Activated naive CD4-positive, alpha-beta T cell treated with anti-CD3 and anti-CD28 coated beads, Interleukin-2, amount 10 ng/mL, durations not matched to agents 7 days and 5 days (primary cell): ENCODE measurements at regions of chr2 and their contacts with region 1.

Region 1: GRCh38 chr2:136059036-136059472 is 58.9 kb downstream of the CXCR4 start:
- DNase-seq: no peak
- H3K4me3 Mint-ChIP-seq: no peak overlapping the region
- H3K27ac Mint-ChIP-seq: peak overlapping the region; percentile 69
- H3K4me1 Mint-ChIP-seq: peaks cover 90% of the 10 kb centered on the region
- H3K27me3 Mint-ChIP-seq: no peaks in the 10 kb centered on the region

Region 2: GRCh38 chr2:135985018-135985825 is 73.8 kb before region 1 on chr2 and contains the start of gene DARS1:
- CTCF ChIA-PET with region 1: interaction called, 25 read pairs
- DNase-seq: peak; percentile 90
- H3K4me3 Mint-ChIP-seq: peak within 1 kb of the TSS; percentile 85
- H3K27ac Mint-ChIP-seq: peak within 1 kb of the TSS; percentile 93
- H3K4me1 Mint-ChIP-seq: peaks cover 59% of the 10 kb centered on the region
- H3K27me3 Mint-ChIP-seq: no peaks in the 10 kb centered on the region

Region 3: DNA sequence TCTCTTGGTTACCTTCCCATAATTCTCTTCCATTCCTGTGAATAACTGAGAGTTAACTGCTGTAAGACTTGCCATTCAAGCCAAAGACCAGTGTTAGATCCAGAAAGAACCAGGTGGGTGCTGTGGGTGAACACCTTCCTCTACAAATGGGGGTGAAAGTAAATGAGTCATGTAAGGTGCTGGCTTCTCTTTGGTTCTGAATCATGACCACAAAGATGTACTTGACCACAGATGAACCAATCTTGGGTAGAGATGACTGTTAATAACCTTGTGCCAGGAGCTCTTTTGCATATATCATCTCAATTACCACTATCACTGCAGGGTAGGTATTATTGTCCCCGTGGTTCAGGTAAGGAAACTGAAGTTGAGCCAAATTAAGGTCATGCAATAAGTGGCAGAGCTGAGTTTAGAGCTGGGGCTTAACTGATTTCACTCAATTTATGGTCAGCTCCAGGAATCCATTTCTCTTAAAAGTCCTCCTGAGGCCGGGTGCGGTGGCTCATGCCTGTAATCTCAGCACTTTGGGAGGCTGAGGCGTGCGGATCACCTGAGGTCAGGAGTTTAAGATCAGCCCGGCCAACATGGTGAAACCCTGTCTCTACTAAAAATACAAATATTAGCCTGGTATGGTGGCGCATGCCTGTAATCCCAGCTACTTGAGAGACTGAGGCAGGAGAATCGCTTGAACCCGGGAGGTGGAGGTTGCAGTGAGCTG is 303.8 kb after region 1 on chr2:
- CTCF ChIA-PET with region 1: no interaction called
- DNase-seq: no peak
- H3K4me3 Mint-ChIP-seq: no peak overlapping the region
- H3K27ac Mint-ChIP-seq: no peak overlapping the region
- H3K4me1 Mint-ChIP-seq: peaks cover 27% of the 10 kb centered on the region
- H3K27me3 Mint-ChIP-seq: peaks cover 6% of the 10 kb centered on the region

Region 4: DNA sequence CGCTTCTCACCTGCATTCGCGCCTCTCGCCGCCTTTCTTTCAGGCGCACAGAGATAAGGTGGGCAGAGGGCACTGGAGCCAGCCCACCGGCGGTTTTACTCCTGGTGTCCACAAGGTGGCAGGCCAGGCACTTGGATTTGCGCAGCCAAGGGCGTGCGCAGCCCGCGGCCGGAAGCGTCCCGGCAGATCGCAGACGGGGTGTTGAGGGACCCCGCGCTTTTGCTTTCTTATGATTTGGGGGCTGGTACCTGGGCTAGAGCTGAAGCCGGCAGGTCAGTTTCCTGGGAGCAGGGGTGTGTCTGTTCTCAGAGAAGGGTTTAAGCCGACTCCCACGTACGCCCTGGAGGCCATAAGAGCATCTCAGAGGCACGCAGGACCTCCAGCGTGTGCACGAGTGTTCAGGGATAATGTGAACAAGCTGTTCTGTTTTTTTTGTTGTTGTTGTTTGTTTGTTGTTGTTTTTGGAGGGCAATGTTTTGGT is 364.5 kb after region 1 on chr2:
- CTCF ChIA-PET with region 1: no interaction called
- DNase-seq: peak; percentile 89
- H3K4me3 Mint-ChIP-seq: peak overlapping the region; percentile 68
- H3K27ac Mint-ChIP-seq: peak overlapping the region; percentile 20
- H3K4me1 Mint-ChIP-seq: peaks cover 23% of the 10 kb centered on the region
- H3K27me3 Mint-ChIP-seq: peaks cover 57% of the 10 kb centered on the region